Activated CD8-positive, alpha-beta T cell treated with anti-CD3 and anti-CD28 coated beads for 36 hours (primary cell): ENCODE measurements at regions of chr7 and their contacts with region 1.

Region 1: DNA sequence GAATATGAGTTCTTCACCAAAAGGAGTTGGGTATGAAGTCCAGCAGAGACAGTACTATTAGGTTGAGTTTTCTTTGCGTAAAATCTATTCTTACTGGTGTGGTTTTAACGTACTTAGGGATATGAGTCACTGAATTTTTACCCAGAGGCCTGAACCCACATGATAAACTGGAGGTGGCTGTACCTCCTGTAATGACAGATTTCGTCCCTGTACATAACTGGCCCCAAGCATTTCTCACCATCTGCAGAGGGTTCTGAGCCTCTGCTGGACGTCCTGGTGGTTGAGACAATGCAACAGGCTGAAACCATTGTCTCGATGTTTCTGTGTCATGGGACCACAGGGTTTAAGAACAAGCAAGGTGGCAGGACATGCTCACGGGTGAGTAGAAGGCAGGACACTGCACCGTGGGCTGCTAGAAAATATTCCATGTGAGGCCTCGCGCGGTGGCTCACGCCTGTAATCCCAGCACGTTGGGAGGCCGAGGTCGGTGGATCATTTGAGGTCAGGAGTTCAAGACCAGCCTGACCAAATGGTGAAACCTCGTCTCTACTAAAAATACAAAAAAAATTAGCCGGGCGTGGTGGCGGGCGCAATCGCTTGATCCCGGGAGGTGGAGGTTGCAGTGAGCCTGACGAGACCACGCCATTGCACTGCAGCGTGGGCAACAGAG is 233.9 kb downstream of the DNAJB6 start:
- DNase-seq: peak; percentile 30
- ATAC-seq: peak; percentile 48
- H3K4me3 Mint-ChIP-seq: no peak overlapping the region
- H3K27ac Mint-ChIP-seq: no peak overlapping the region
- H3K4me1 Mint-ChIP-seq: peaks cover 44% of the 10 kb centered on the region
- H3K27me3 Mint-ChIP-seq: no peaks in the 10 kb centered on the region
- CTCF ChIP-seq: no peak

Region 2: GRCh38 chr7:157490457-157490912 is 80.2 kb before region 1 on chr7:
- CTCF ChIA-PET with region 1: no interaction called
- POLR2A ChIA-PET with region 1: no interaction called
- intact Hi-C with region 1: loop called (anchors 5 kb)
- DNase-seq: peak; percentile 71
- ATAC-seq: peak; percentile 83
- H3K4me3 Mint-ChIP-seq: no peak overlapping the region
- H3K27ac Mint-ChIP-seq: peak overlapping the region; percentile 69
- H3K4me1 Mint-ChIP-seq: peaks cover 39% of the 10 kb centered on the region
- H3K27me3 Mint-ChIP-seq: peaks cover 21% of the 10 kb centered on the region
- CTCF ChIP-seq: no peak